IMR-90 (cell line): ENCODE measurements at regions of chr5 and their contacts with region 1.

Region 1: GRCh38 chr5:154714266-154714986 is 40.8 kb upstream of the LARP1 start:
- DNase-seq: peak; percentile 77
- ATAC-seq: peak; percentile 88
- H3K4me3 ChIP-seq: no peak overlapping the region
- H3K27ac ChIP-seq: peak overlapping the region; percentile 83; the same call in 1 of the 2 replicates
- H3K4me1 ChIP-seq: peaks cover 12% of the 10 kb centered on the region
- H3K27me3 ChIP-seq: no peaks in the 10 kb centered on the region
- CTCF ChIP-seq: no peak
- POLR2A ChIP-seq: no peak
- RAD21 ChIP-seq: no peak

Region 2: GRCh38 chr5:154663424-154663823 is 51.0 kb before region 1 on chr5:
- CTCF ChIA-PET with region 1: no interaction called
- POLR2A ChIA-PET with region 1: no interaction called
- dilution Hi-C with region 1: no loop called
- in situ Hi-C with region 1: no loop called
- intact Hi-C with region 1: no loop called
- DNase-seq: no peak
- ATAC-seq: no peak
- H3K4me3 ChIP-seq: no peak overlapping the region
- H3K27ac ChIP-seq: no peak overlapping the region
- H3K4me1 ChIP-seq: no peaks in the 10 kb centered on the region
- H3K27me3 ChIP-seq: peaks cover under 1% of the 10 kb centered on the region; the same call in 1 of the 2 replicates
- CTCF ChIP-seq: no peak
- POLR2A ChIP-seq: no peak
- RAD21 ChIP-seq: no peak

Region 3: GRCh38 chr5:154683101-154683880 is 31.1 kb before region 1 on chr5:
- CTCF ChIA-PET with region 1: no interaction called
- POLR2A ChIA-PET with region 1: no interaction called
- dilution Hi-C with region 1: no loop called
- in situ Hi-C with region 1: no loop called
- intact Hi-C with region 1: loop called (anchors 2 kb)
- DNase-seq: no peak
- ATAC-seq: peak; percentile 9; the same call in 1 of the 2 replicates
- H3K4me3 ChIP-seq: peak overlapping the region; percentile 55
- H3K27ac ChIP-seq: no peak overlapping the region
- H3K4me1 ChIP-seq: no peaks in the 10 kb centered on the region
- H3K27me3 ChIP-seq: no peaks in the 10 kb centered on the region
- CTCF ChIP-seq: no peak
- POLR2A ChIP-seq: no peak
- RAD21 ChIP-seq: no peak

Region 4: GRCh38 chr5:154892369-154892771 is 177.9 kb after region 1 on chr5:
- CTCF ChIA-PET with region 1: no interaction called
- POLR2A ChIA-PET with region 1: no interaction called
- dilution Hi-C with region 1: no loop called
- in situ Hi-C with region 1: no loop called
- intact Hi-C with region 1: no loop called
- DNase-seq: no peak
- ATAC-seq: no peak
- H3K4me3 ChIP-seq: no peak overlapping the region
- H3K27ac ChIP-seq: no peak overlapping the region
- H3K4me1 ChIP-seq: no peaks in the 10 kb centered on the region
- H3K27me3 ChIP-seq: no peaks in the 10 kb centered on the region
- CTCF ChIP-seq: no peak
- POLR2A ChIP-seq: no peak
- RAD21 ChIP-seq: no peak